T-cell (primary cell): ENCODE measurements at regions of chr19 and their contacts with region 1.

Region 1: DNA sequence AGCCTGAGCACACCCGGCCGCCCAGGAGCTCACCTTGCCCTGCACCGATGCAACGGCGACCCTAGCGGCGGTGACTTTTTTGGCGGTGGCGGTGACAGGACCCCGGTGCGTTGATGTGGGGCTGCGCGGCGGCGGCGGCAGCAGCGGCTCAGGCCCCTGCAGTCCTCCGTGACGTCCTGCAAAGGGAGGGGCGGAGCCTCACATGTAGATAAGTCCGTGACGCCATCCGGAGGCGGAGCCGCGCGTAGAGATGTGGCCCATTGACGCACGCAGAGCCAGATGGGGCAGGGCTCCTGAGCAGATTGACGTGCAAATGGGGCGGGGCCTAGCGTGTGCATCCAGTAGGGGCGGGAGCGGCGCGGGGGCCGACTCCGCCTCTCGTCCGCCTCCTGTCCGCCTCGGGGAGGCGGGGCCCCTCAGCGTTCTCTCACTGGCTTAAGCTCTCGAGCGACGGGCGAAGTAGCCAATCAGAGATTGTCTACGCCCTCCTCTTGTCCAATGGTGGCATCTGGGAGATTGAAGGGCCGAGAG is at the start of gene RAB3A:
- DNase-seq: peak; percentile 95 to 100 (median 100)
- ATAC-seq: peak; percentile 87 to 93 (median 88)
- H3K4me3 ChIP-seq: peak within 1 kb of the TSS; percentile 84 to 89
- H3K4me3 Mint-ChIP-seq: peak within 1 kb of the TSS; percentile 87 to 94 (median 89)
- H3K27ac ChIP-seq: peak within 1 kb of the TSS; percentile 77
- H3K27ac Mint-ChIP-seq: peak within 1 kb of the TSS; percentile 94 to 95
- H3K4me1 ChIP-seq: peaks cover 12 to 31% of the 10 kb centered on the region in 2 experiments
- H3K4me1 Mint-ChIP-seq: peaks cover 22 to 30% (median 24%) of the 10 kb centered on the region in 3 donors
- H3K27me3 ChIP-seq: peaks cover 0 to 13% of the 10 kb centered on the region in 2 experiments
- H3K27me3 Mint-ChIP-seq: peaks cover 4 to 8% of the 10 kb centered on the region in 2 donors
- total RNA-seq, gene RAB3A: 4.7 to 8.3 (median 5.6) TPM

Region 2: GRCh38 chr19:18074190-18074589 is 129.7 kb before region 1 on chr19:
- CTCF ChIA-PET with region 1: no interaction called
- POLR2A ChIA-PET with region 1: no interaction called
- DNase-seq: no peak
- ATAC-seq: peak in 1 of 4 experiments; percentile 49
- H3K4me3 ChIP-seq: no peak overlapping the region
- H3K4me3 Mint-ChIP-seq: peak overlapping the region in 1 of 3 donors; percentile 7
- H3K27ac ChIP-seq: no peak overlapping the region
- H3K27ac Mint-ChIP-seq: peak overlapping the region in 1 of 2 donors; percentile 23
- H3K4me1 ChIP-seq: peaks cover 2 to 14% of the 10 kb centered on the region in 2 experiments
- H3K4me1 Mint-ChIP-seq: peaks cover 13 to 14% (median 14%) of the 10 kb centered on the region in 3 donors
- H3K27me3 ChIP-seq: no peaks in the 10 kb centered on the region
- H3K27me3 Mint-ChIP-seq: no peaks in the 10 kb centered on the region

Region 3: GRCh38 chr19:18192673-18193387 is 11.1 kb before region 1 on chr19 and contains the start of gene MPV17L2:
- CTCF ChIA-PET with region 1: interaction called in 1 of 2 experiments, 26 read pairs
- POLR2A ChIA-PET with region 1: no interaction called
- DNase-seq: peak; percentile 92 to 99 (median 99)
- ATAC-seq: peak; percentile 87 to 93 (median 92)
- H3K4me3 ChIP-seq: peak within 1 kb of the TSS; percentile 83 to 86
- H3K4me3 Mint-ChIP-seq: peak within 1 kb of the TSS; percentile 87 to 95 (median 87)
- H3K27ac ChIP-seq: peak within 1 kb of the TSS; percentile 84
- H3K27ac Mint-ChIP-seq: peak within 1 kb of the TSS; percentile 95 to 97
- H3K4me1 ChIP-seq: peaks cover 12 to 29% of the 10 kb centered on the region in 2 experiments
- H3K4me1 Mint-ChIP-seq: peaks cover 21 to 24% (median 23%) of the 10 kb centered on the region in 3 donors
- H3K27me3 ChIP-seq: no peaks in the 10 kb centered on the region
- H3K27me3 Mint-ChIP-seq: no peaks in the 10 kb centered on the region
- total RNA-seq, gene MPV17L2: 3.8 to 8.2 (median 8.1) TPM

Region 4: GRCh38 chr19:18214779-18215433 is 11.0 kb after region 1 on chr19:
- CTCF ChIA-PET with region 1: no interaction called
- POLR2A ChIA-PET with region 1: no interaction called
- DNase-seq: no peak
- ATAC-seq: no peak
- H3K4me3 ChIP-seq: no peak overlapping the region
- H3K4me3 Mint-ChIP-seq: no peak overlapping the region
- H3K27ac ChIP-seq: no peak overlapping the region
- H3K27ac Mint-ChIP-seq: no peak overlapping the region
- H3K4me1 ChIP-seq: no peaks in the 10 kb centered on the region
- H3K4me1 Mint-ChIP-seq: peaks cover 0 to under 1% (median 0%) of the 10 kb centered on the region in 3 donors
- H3K27me3 ChIP-seq: peaks cover 0 to 44% of the 10 kb centered on the region in 2 experiments
- H3K27me3 Mint-ChIP-seq: peaks cover 0 to 12% of the 10 kb centered on the region in 2 donors

Region 5: GRCh38 chr19:18251587-18252369 is 47.9 kb after region 1 on chr19:
- CTCF ChIA-PET with region 1: interaction called, 3 to 13 read pairs
- POLR2A ChIA-PET with region 1: no interaction called
- DNase-seq: peak; percentile 41 to 90 (median 74)
- ATAC-seq: peak; percentile 72 to 86 (median 83)
- H3K4me3 ChIP-seq: no peak overlapping the region
- H3K4me3 Mint-ChIP-seq: no peak overlapping the region
- H3K27ac ChIP-seq: no peak overlapping the region
- H3K27ac Mint-ChIP-seq: no peak overlapping the region
- H3K4me1 ChIP-seq: peaks cover 0 to 5% of the 10 kb centered on the region in 2 experiments
- H3K4me1 Mint-ChIP-seq: peaks cover 3 to 13% (median 4%) of the 10 kb centered on the region in 3 donors
- H3K27me3 ChIP-seq: peaks cover 0 to 57% of the 10 kb centered on the region in 2 experiments
- H3K27me3 Mint-ChIP-seq: peaks cover 26 to 30% of the 10 kb centered on the region in 2 donors

Region 6: DNA sequence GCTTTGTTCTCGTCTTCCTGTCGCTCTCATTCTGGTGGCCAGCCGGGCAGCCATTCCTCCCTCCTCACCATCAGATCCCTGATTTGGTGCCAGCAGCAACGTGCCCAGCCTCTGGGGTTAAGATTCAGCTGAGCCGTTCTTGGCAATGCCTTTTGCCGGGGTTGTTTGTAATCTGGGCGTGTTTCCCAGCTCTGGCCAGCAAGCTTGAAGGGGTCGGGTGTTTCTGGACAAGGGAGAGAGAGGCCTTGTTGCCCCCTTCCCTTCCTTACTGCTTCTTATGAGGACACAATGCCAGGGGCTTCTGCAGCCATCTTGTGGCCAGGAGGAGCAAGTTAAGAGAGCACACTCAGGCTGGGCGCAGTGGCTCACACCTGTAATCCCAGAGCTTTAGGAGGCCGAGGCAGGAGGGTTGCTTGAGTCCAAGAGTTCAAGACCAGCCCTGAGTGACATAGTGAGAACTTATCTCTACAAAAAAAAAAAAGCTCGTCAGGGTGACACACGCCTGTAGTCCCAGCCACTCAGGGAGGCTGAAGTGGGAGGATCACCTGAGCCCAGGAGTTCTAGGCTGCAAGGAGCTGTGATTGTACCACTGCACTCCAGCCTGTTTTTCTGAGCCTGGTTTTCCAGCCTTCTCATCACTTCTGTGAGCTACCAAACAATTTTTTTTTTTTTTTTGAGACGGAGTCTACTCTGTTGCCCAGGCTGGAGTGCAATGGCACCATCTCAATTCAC is 468.8 kb after region 1 on chr19:
- CTCF ChIA-PET with region 1: no interaction called
- POLR2A ChIA-PET with region 1: no interaction called
- DNase-seq: no peak
- ATAC-seq: no peak
- H3K4me3 ChIP-seq: no peak overlapping the region
- H3K4me3 Mint-ChIP-seq: no peak overlapping the region
- H3K27ac ChIP-seq: no peak overlapping the region
- H3K27ac Mint-ChIP-seq: no peak overlapping the region
- H3K4me1 ChIP-seq: no peaks in the 10 kb centered on the region
- H3K4me1 Mint-ChIP-seq: no peaks in the 10 kb centered on the region
- H3K27me3 ChIP-seq: peaks cover 0 to 5% of the 10 kb centered on the region in 2 experiments
- H3K27me3 Mint-ChIP-seq: no peaks in the 10 kb centered on the region

Region 7: DNA sequence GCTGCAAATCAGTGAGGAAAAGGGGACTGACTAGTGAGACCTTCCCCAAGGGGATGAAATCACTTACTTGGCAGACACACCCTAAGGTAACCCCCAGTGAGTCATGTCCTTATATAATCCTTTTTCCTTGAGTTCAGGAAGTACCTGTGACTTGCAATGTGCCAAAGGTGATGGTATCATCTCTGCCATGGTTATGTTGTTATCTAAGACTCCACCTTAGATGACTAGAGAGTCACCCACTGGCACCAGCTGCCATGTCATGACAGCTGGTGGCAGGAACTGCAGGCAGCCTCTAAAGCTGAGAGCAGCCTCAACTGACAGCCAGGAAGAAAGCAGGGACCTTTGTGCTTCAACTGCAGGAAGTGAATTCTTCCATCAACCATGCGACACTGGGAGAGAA is 1402.1 kb after region 1 on chr19:
- CTCF ChIA-PET with region 1: no interaction called
- POLR2A ChIA-PET with region 1: interaction called in 1 of 2 experiments, 10 read pairs
- DNase-seq: peak in 34 of 35 experiments; percentile 25 to 77 (median 53)
- ATAC-seq: peak; percentile 85 to 90 (median 89)
- H3K4me3 ChIP-seq: no peak overlapping the region
- H3K4me3 Mint-ChIP-seq: peak overlapping the region; percentile 47 to 57 (median 55)
- H3K27ac ChIP-seq: peak overlapping the region; percentile 85
- H3K27ac Mint-ChIP-seq: peak overlapping the region; percentile 96 to 97
- H3K4me1 ChIP-seq: peaks cover 36 to 58% of the 10 kb centered on the region in 2 experiments
- H3K4me1 Mint-ChIP-seq: peaks cover 57 to 69% (median 66%) of the 10 kb centered on the region in 3 donors
- H3K27me3 ChIP-seq: no peaks in the 10 kb centered on the region
- H3K27me3 Mint-ChIP-seq: no peaks in the 10 kb centered on the region